Activated T-helper 1 cell treated with anti-CD3 and anti-CD28 coated beads, Interleukin-12 subunit alpha, Interleukin-12 subunit beta, Interleukin-2, Interleukin-4 antibody, amounts not matched to agents 30 ng/mL and 10 ng/mL and 1 ng/mL, durations not matched to agents 14 hours and 24 hours and 36 hours (primary cell): ENCODE measurements at regions of chr19 and their contacts with region 1.

Region 1: GRCh38 chr19:21767065-21767800 is at the start of gene ZNF100:
- DNase-seq: peak; percentile 80
- H3K4me3 Mint-ChIP-seq: peak within 1 kb of the TSS; percentile 94
- H3K27ac Mint-ChIP-seq: peak within 1 kb of the TSS; percentile 85
- H3K4me1 Mint-ChIP-seq: peaks cover 35% of the 10 kb centered on the region
- H3K27me3 Mint-ChIP-seq: no peaks in the 10 kb centered on the region
- total RNA-seq, gene ZNF100: 20.6 and 21.8 TPM in 2 replicates

Region 2: DNA sequence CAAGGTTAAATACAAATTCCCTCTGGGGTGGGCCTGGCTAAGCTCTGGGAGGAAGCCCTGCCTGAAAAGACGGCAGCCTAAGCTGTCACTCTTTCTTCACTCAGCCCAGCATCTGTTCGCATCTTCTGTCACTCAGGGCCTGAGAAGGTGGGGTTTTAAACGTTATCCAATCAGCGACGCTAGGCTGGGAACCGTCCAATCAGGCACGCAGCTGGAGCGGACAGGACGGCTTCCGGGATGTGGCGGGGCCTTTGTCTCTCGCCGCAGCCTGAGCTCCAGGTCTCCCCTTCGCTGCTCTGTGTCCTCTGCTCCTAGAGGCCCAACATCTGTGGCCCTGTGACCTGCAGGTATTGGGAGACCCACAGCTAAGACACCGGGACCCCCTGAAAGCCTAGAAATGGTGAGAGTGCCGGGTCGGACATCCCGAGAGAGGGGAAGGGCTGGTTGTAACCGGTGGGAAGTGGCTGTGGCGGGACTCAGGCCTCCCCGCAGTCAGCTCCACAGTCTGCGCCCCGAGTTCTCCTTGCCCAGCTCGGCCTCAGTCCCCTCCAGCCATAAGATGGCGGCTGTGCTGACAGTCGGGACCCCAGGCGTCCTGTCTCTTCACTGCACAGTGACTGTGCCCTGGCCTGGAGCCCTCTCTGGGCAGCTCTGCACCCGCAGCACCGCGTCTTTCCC is 625.3 kb before region 1 on chr19 and contains the start of gene ZNF431:
- intact Hi-C with region 1: loop called (anchors 10 kb)
- DNase-seq: peak; percentile 85
- H3K4me3 Mint-ChIP-seq: peak within 1 kb of the TSS; percentile 96
- H3K27ac Mint-ChIP-seq: peak within 1 kb of the TSS; percentile 91
- H3K4me1 Mint-ChIP-seq: peaks cover 25% of the 10 kb centered on the region
- H3K27me3 Mint-ChIP-seq: no peaks in the 10 kb centered on the region
- total RNA-seq, gene ZNF431: 16.0 and 16.8 TPM in 2 replicates

Region 3: DNA sequence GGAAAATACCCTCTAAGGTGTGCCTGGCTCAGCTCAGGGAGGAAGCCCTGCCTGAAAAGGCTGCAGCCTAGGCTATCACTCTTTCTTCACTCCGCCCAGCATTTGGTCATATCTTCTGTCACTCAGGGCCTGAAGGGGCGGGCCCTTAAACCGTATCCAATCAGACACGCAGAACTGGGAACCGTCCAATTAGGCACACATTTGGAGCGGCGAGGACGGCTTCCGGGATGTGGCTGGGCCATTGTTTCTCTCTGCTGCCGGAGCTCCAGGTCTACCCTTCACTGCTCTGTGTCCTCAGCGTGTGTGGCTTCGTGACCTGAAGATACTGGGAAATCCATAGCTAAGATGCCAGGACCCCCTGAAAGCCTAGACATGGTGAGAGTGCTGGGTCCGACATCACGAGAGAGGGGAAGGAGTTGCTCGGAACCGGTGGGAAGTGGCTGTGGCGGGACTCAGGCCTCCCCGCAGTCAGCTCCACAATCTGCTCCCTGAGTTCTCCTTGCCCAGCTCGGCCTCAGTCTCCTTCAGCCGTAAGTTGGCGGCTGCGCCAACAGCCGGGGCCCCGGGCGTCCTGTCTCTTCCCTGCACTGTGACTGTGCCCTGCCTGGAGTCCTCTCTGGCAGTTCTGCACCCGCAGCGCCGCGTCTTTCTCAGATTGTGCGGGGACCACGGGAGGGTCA is 370.2 kb before region 1 on chr19 and contains the start of gene ZNF493:
- intact Hi-C with region 1: loop called (anchors 1 kb)
- DNase-seq: peak; percentile 87
- H3K4me3 Mint-ChIP-seq: peak within 1 kb of the TSS; percentile 97
- H3K27ac Mint-ChIP-seq: peak within 1 kb of the TSS; percentile 83
- H3K4me1 Mint-ChIP-seq: peaks cover 14% of the 10 kb centered on the region
- H3K27me3 Mint-ChIP-seq: no peaks in the 10 kb centered on the region
- total RNA-seq, gene ZNF493: 9.6 and 12.6 TPM in 2 replicates

Region 4: GRCh38 chr19:21823224-21823623 is 56.0 kb after region 1 on chr19:
- intact Hi-C with region 1: no loop called
- DNase-seq: no peak
- H3K4me3 Mint-ChIP-seq: no peak overlapping the region
- H3K27ac Mint-ChIP-seq: no peak overlapping the region
- H3K4me1 Mint-ChIP-seq: no peaks in the 10 kb centered on the region
- H3K27me3 Mint-ChIP-seq: no peaks in the 10 kb centered on the region

Region 5: GRCh38 chr19:21851596-21852345 is 84.5 kb after region 1 on chr19:
- intact Hi-C with region 1: loop called (anchors 1 kb)
- DNase-seq: peak; percentile 80
- H3K4me3 Mint-ChIP-seq: peak overlapping the region; percentile 90
- H3K27ac Mint-ChIP-seq: peak overlapping the region; percentile 87
- H3K4me1 Mint-ChIP-seq: peaks cover 21% of the 10 kb centered on the region
- H3K27me3 Mint-ChIP-seq: no peaks in the 10 kb centered on the region